Activated T-helper 2 cell treated with anti-CD3 and anti-CD28 coated beads, Interferon-gamma antibody, Interleukin-2, Interleukin-4, amounts not matched to agents 10 μg/mL and 5 μg/mL and 100 μg/mL, durations not matched to agents 14 hours and 24 hours and 36 hours (primary cell): ENCODE measurements at regions of chr21 and their contacts with region 1.

Region 1: GRCh38 chr21:43842742-43843141 is 22.3 kb upstream of the AGPAT3 start:
- DNase-seq: no peak
- H3K4me3 Mint-ChIP-seq: peak overlapping the region; percentile 20
- H3K27ac Mint-ChIP-seq: peak overlapping the region; percentile 29
- H3K4me1 Mint-ChIP-seq: peaks cover 16% of the 10 kb centered on the region
- H3K27me3 Mint-ChIP-seq: no peaks in the 10 kb centered on the region

Region 2: GRCh38 chr21:43854773-43855633 is 12.3 kb after region 1 on chr21:
- intact Hi-C with region 1: loop called (anchors 1 kb)
- DNase-seq: peak; percentile 78
- H3K4me3 Mint-ChIP-seq: peak overlapping the region; percentile 60
- H3K27ac Mint-ChIP-seq: peak overlapping the region; percentile 87
- H3K4me1 Mint-ChIP-seq: peaks cover 33% of the 10 kb centered on the region
- H3K27me3 Mint-ChIP-seq: no peaks in the 10 kb centered on the region

Region 3: GRCh38 chr21:43893536-43894205 is 50.9 kb after region 1 on chr21:
- intact Hi-C with region 1: loop called (anchors 1 kb)
- DNase-seq: peak; percentile 26
- H3K4me3 Mint-ChIP-seq: peak overlapping the region; percentile 56
- H3K27ac Mint-ChIP-seq: peak overlapping the region; percentile 83
- H3K4me1 Mint-ChIP-seq: peaks cover 37% of the 10 kb centered on the region
- H3K27me3 Mint-ChIP-seq: no peaks in the 10 kb centered on the region